Activated CD8-positive, alpha-beta T cell treated with anti-CD3 and anti-CD28 coated beads, Interleukin-2, amount 10 ng/mL, durations not matched to agents 7 days and 5 days (primary cell): ENCODE measurements at regions of chr16 and their contacts with region 1.

Region 1: DNA sequence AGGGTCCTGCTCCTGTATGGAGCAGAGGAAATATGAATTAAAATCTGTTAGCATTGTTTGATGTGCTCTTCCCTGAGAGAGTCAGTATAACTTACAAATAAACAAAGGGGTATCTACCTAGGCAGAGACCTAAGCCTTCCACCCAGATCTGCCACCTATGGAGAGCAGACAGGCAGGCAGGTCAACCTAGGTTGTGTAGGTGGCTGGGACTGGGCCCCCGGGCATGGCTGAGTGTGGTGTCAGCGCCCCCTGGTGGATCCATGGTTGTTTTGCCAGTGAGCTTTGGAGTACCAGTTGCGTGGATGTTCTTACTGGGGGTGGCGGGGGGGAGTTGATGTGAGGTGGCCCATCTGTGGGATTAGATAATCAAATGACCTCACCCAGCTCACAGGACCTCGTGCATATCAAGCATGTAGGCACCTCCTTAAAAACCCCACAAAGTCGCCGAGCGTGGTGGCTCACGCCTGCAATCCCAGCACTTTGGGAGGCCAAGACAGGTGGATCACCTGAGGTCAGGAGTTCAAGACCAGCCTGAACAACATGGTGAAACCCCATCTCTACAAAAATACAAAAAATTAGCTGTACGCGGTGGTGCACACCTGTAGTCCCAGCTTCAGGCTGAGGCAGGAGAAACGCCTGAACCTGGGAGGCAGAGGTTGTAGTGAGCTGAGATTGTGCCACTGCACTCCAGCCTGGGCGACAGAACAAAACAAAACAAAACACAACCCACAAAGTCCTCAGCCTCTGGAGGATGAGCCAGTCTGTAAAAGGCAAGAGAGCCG is 17.6 kb downstream of the DUS2 start:
- DNase-seq: peak; percentile 93
- ATAC-seq: peak; percentile 99
- H3K4me3 Mint-ChIP-seq: no peak overlapping the region
- H3K27ac Mint-ChIP-seq: peak overlapping the region; percentile 69
- H3K4me1 Mint-ChIP-seq: peaks cover 26% of the 10 kb centered on the region
- H3K27me3 Mint-ChIP-seq: no peaks in the 10 kb centered on the region

Region 2: GRCh38 chr16:67883872-67884261 is 156.8 kb before region 1 on chr16:
- CTCF ChIA-PET with region 1: interaction called, 18 read pairs
- POLR2A ChIA-PET with region 1: no interaction called
- DNase-seq: peak; percentile 76
- ATAC-seq: peak; percentile 81
- H3K4me3 Mint-ChIP-seq: no peak overlapping the region
- H3K27ac Mint-ChIP-seq: no peak overlapping the region
- H3K4me1 Mint-ChIP-seq: no peaks in the 10 kb centered on the region
- H3K27me3 Mint-ChIP-seq: no peaks in the 10 kb centered on the region

Region 3: DNA sequence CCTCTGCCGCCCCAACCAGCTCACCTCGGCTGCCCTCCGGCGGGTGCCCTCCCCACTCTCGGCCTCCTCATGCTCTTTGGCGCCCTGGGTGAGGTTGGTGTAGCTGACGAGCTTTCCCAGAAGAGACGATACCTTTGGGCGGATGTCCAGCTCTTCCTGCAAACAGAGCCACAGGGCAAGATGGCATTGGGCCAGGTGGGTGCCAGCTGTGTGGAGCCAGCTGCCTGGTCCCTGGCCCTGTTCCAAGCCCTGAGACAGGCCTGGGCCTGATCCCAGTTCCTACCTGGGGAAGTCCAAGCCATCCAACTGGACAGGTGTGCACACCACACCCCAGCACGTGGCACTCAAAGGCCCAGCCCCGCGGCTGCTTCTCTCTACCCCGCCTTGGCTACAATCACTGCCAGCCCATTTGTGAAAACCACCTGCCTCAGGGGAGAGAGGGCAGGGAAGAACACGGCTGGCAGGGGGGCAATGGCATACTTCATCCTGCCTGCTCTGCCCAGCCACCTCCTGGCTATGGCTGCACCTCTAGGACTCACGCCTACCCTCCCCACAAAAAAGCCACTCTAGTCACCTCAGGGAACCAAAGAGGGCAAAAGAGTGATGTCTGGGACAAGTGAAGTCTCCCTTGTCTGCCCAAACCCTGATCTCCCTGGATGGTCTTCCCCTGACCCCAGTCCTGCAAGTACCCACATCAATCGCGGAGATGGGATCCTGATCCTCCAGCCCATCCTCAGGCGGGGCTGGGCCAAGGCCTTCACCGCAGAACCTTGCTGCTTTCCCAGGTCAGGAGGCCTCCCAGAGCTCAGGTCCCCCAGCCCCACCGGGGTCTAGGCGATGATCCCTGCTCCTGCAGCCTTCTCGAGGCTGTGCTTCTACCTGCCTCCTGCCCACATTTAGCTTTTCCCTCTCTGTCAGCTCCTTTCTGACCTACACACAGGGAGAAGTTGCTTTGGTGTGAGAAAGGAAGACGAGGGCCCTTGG is 78.9 kb before region 1 on chr16:
- CTCF ChIA-PET with region 1: interaction called, 12 read pairs
- POLR2A ChIA-PET with region 1: no interaction called
- DNase-seq: no peak
- ATAC-seq: no peak
- H3K4me3 Mint-ChIP-seq: no peak overlapping the region
- H3K27ac Mint-ChIP-seq: no peak overlapping the region
- H3K4me1 Mint-ChIP-seq: peaks cover 18% of the 10 kb centered on the region
- H3K27me3 Mint-ChIP-seq: no peaks in the 10 kb centered on the region

Region 4: DNA sequence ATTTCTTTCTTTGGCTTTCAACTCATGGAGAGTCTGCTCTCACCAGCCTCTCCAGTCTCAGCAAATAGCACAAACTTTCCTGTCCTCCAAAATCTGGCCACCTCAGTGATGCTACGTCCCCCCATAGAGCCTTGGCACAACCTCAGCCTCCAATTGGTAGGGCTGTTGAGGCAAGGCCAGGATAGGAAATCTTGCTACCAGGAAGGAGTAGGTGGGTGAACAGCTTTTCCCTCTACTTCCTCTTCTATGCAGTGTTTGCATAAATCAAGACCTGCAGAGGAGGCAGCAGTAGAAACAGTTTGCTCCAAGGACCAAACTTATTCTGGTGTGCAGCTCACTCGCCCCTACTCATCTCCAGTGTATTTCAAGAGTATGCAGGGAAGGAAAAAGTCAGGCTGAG is 40.7 kb before region 1 on chr16:
- CTCF ChIA-PET with region 1: interaction called, 30 read pairs
- POLR2A ChIA-PET with region 1: interaction called, 3 read pairs
- DNase-seq: no peak
- ATAC-seq: peak; percentile 17
- H3K4me3 Mint-ChIP-seq: peak overlapping the region; percentile 60
- H3K27ac Mint-ChIP-seq: peak overlapping the region; percentile 82
- H3K4me1 Mint-ChIP-seq: peaks cover 45% of the 10 kb centered on the region
- H3K27me3 Mint-ChIP-seq: no peaks in the 10 kb centered on the region

Region 5: DNA sequence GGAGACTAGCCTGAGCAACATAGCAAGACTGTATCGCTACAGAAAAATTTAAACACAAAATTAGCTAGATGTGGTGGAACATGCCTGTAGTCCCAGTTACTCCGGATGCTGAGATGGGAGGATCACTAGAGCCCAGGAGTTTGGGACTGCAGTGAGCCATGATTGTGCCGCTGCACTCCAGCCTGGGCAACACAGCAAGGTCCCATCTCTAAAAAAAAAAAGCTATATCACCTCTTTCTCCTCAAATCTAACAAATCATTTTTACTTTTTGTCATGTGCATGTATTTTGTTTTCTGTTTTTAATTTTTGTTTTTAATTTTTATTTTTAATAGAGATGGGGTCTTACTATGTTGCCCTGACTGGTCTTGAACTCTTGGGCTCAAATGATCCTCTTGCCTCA is 11.7 kb before region 1 on chr16:
- CTCF ChIA-PET with region 1: interaction called, 16 read pairs
- POLR2A ChIA-PET with region 1: interaction called, 3 read pairs
- DNase-seq: no peak
- ATAC-seq: no peak
- H3K4me3 Mint-ChIP-seq: no peak overlapping the region
- H3K27ac Mint-ChIP-seq: no peak overlapping the region
- H3K4me1 Mint-ChIP-seq: peaks cover 30% of the 10 kb centered on the region
- H3K27me3 Mint-ChIP-seq: no peaks in the 10 kb centered on the region

Region 6: GRCh38 chr16:68093816-68094613 is 53.3 kb after region 1 on chr16:
- CTCF ChIA-PET with region 1: interaction called, 10 read pairs
- POLR2A ChIA-PET with region 1: no interaction called
- DNase-seq: no peak
- ATAC-seq: peak; percentile 67
- H3K4me3 Mint-ChIP-seq: no peak overlapping the region
- H3K27ac Mint-ChIP-seq: peak overlapping the region; percentile 31
- H3K4me1 Mint-ChIP-seq: peaks cover 71% of the 10 kb centered on the region
- H3K27me3 Mint-ChIP-seq: no peaks in the 10 kb centered on the region

Region 7: GRCh38 chr16:68113059-68113761 is 72.5 kb after region 1 on chr16:
- CTCF ChIA-PET with region 1: no interaction called
- POLR2A ChIA-PET with region 1: no interaction called
- DNase-seq: no peak
- ATAC-seq: no peak
- H3K4me3 Mint-ChIP-seq: no peak overlapping the region
- H3K27ac Mint-ChIP-seq: no peak overlapping the region
- H3K4me1 Mint-ChIP-seq: peaks cover 72% of the 10 kb centered on the region
- H3K27me3 Mint-ChIP-seq: no peaks in the 10 kb centered on the region